Right ventricle myocardium inferior (tissue), 1 donor: ENCODE measurements at regions of chr7 and their contacts with region 1.

Region 1: GRCh38 chr7:74254129-74254857 is at the start of gene RFC2:
- DNase-seq: peak; percentile 99
- ATAC-seq: peak; percentile 99
- total RNA-seq, gene RFC2: 12.4 TPM

Region 2: GRCh38 chr7:74206589-74207120 is 47.6 kb before region 1 on chr7:
- intact Hi-C with region 1: no loop called
- DNase-seq: peak; percentile 93
- ATAC-seq: peak; percentile 85

Region 3: DNA sequence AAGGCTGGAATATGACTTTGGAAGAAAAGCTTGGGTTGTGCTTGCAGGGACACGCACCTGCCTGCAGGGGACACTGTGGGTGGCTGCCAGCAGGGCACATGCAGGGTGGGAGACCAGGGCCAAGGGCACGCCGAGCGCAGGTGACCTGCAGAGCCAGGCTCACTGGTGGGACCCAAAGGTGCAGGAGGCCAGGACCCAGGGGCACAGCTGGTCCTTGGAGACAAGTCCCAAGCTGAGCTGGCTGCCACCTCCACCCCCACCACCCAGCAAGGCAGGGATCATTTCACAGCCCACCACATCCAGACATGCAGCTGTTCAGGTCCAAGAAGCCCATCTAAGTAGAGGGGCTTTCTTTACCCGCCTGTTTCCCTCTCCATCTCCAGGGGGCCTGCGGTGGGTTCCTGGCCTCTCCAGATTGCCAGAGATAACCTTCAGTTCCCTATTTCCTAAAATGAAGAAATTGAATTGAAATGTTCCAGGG is 21.1 kb after region 1 on chr7:
- intact Hi-C with region 1: loop called (anchors 1 kb)
- DNase-seq: peak; percentile 72
- ATAC-seq: no peak

Region 4: DNA sequence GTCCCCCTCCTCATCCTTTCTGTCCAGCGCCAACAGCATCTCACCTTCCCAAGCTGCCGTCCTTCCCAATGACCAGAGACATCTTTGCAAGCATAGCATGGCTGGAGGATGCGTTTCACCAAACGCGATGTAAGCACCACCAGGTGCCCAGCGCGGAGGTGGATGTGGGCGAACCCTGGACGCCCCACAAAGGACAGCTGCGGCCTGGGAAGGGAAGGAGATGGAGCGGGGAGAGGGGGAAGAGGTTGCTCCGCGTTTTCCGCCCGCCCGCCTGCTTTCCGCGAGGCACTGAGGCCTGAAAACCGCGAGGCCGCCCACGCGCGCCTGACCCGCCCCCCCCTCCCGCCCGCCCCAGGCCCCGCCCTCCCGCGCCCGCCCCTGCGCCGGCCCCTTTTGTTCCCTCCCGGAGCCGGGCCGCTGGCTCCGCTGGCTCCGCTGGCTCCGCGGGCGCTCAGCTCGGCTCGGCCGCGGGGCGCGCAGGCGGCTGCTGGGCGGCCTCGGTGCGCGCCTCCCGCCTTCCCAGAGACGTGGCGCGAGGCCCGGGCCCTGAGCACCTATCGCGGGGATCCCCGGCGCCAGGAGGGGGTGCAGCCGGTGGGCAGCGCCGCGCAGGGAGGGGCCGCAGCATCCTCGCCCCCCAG is 34.8 kb after region 1 on chr7 and contains the start of gene CLIP2:
- intact Hi-C with region 1: loop called (anchors 5 kb)
- DNase-seq: peak; percentile 91
- ATAC-seq: peak; percentile 89
- total RNA-seq, gene CLIP2: 7.5 TPM

Region 5: DNA sequence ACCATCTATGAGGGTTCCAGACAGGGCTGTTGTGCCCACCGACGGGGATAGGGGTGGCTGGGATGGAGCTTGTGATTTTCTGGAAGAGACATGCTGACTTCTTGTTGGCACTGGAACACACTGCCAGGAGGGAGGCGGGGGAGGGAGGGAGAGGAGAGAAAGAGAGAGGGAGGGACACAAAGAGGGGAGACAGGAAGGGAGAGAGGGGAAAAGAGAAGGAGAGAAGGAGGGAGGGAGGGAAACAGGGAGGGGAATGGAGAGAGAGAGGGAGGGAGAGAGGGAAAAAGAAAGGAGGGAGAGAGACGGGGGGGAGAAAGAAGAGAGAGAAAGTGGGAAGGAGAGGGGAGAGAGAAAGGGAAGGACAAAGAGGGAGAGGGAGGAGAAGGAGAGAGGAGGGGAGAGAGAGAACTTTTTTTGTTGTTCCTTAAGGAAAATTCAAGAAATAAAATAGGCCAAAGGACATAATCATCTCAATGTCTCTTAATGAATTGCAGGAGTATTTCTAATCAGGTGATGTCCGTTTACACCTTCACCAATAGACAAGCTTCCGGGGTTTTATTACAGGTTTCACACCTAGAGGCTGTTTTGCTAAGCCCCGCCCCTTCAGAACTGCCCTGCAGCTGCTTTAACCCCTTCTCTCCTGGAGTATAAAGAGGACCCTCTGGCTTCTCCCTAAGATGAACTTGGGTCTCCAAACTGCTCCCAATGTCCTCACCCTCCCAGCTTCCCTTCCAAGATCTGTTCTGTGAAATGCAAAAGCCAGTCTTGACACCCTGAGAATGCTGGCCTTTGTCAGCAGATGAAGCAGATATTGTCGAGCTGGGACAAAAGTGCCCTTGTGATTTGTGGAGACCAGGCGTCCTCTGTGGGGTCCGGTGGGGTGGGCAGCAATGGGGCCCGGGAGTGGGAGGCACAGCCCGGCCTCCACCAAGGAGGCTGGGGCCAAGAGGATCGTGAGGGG is 117.4 kb after region 1 on chr7:
- intact Hi-C with region 1: loop called (anchors 5 kb)
- DNase-seq: no peak
- ATAC-seq: no peak

Region 6: DNA sequence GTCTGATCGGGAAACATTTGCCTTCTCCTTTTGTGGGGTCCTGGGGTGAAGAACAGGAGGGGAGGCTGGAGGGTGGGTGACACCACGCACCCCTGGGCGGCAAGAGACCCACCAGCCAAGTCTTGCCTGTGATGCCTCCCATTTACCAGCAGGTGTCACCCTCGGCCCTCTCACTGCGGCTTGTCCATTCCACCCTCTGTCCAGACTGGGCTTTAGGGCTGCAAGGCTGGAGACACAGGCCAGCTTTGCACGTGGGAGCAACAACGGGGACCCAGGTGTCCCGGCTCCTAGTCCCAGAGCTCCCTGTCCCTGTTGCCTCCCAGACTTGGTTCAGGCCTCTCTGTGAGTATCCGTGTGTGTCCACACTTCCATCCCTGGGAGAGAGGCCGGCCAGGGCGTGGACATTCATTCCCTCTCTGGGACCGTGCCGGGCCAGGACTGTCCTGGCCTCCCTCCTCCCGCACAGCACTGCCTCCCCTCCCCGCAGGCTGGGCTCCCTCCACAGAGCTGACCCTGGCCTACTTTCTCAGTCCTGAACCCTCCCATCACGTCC is 163.2 kb after region 1 on chr7:
- intact Hi-C with region 1: no loop called
- DNase-seq: peak; percentile 81
- ATAC-seq: peak; percentile 87

Region 7: GRCh38 chr7:74502181-74502891 is 248.0 kb after region 1 on chr7:
- intact Hi-C with region 1: no loop called
- DNase-seq: no peak
- ATAC-seq: peak; percentile 29